KBM-7 (cell line): ENCODE measurements at regions of chr2 and their contacts with region 1.

Region 1: GRCh38 chr2:39723946-39724827 is 54.9 kb downstream of the THUMPD2 start:
- DNase-seq: no peak

Region 2: DNA sequence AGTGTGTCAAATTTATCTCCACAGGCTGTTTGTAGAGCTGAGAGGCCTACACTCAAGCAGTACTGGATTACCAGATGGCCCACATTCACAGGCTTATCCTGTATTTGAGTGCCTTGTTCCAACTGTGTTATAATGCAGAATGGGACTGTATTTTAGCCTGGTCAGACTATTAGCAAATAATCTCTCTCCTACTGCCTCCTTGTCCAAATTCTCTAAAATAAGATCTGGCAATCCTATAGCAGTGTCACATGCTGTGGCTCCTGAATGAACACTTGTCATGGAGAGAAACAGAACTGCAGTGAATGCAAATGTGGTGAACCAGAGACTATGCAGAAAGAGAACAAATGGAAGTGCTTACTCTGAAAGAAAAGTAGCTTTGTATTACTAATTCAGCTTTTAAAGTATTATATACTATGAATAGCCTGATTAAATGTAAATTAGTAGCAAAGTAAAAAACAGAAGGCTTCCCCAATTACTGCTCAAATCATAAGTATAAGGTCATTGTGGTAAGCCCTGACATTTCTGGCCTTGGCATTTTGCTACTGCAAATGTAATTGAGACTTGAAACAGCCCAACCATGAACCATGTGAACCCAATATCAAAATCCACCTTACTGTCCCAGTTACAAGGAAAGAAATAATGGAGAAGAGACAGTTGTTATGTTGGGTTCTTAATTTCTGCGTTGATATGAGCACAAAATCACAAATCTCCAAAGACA is 367.1 kb before region 1 on chr2:
- in situ Hi-C with region 1: loop called (anchors 25 kb)
- DNase-seq: no peak